PC-3 (cell line): ENCODE measurements at regions of chr15 and their contacts with region 1.

Region 1: GRCh38 chr15:92968926-92969651 is 69.0 kb downstream of the CHD2 start:
- DNase-seq: no peak
- ATAC-seq: no peak
- H3K4me3 ChIP-seq: no peak overlapping the region
- H3K27ac ChIP-seq: no peak overlapping the region
- H3K4me1 ChIP-seq: no peaks in the 10 kb centered on the region
- H3K27me3 ChIP-seq: no peaks in the 10 kb centered on the region
- CTCF ChIP-seq: 0 out of 2 replicates have a peak, but pooled peaks have one; percentile 23

Region 2: DNA sequence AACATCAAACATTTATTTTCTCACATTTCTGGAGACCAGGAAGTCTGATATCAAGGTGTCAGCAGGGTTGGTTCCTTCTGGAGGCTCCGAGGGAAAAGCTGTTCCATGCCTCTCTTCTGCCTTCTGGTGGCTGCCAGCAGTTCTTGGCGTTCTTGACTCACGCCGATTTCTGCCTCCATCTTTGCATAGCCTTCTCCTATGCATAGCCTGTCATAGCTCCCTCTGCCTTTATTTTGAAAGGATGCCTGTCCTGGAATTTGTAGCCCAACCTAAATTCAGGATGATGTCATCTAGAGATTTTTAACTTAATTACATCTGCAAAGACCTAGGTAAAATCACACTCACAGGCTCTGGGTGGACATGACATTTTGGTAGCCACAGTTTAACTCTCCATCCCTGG is 49.5 kb after region 1 on chr15:
- CTCF ChIA-PET with region 1: no interaction called
- POLR2A ChIA-PET with region 1: no interaction called
- intact Hi-C with region 1: loop called (anchors 10 kb)
- DNase-seq: no peak
- ATAC-seq: peak; percentile 27; the same call in 1 of the 2 replicates
- H3K4me3 ChIP-seq: no peak overlapping the region
- H3K27ac ChIP-seq: no peak overlapping the region
- H3K4me1 ChIP-seq: no peaks in the 10 kb centered on the region
- H3K27me3 ChIP-seq: no peaks in the 10 kb centered on the region
- CTCF ChIP-seq: peak; percentile 40; the same call in 1 of the 2 replicates